ENCODE measurements at regions of chr3 and their contacts with region 1.

Region 1: GRCh38 chr3:185335799-185336198 is 27.1 kb upstream of the MAP3K13 start:
- DNase-seq: peak; percentile 98
- ATAC-seq: peak; percentile 82
- H3K4me3 ChIP-seq: no peak overlapping the region
- H3K27ac ChIP-seq: peak overlapping the region; percentile 77
- H3K4me1 ChIP-seq: peaks cover 53% of the 10 kb centered on the region
- H3K27me3 ChIP-seq: no peaks in the 10 kb centered on the region
- CTCF ChIP-seq: no peak

Region 2: DNA sequence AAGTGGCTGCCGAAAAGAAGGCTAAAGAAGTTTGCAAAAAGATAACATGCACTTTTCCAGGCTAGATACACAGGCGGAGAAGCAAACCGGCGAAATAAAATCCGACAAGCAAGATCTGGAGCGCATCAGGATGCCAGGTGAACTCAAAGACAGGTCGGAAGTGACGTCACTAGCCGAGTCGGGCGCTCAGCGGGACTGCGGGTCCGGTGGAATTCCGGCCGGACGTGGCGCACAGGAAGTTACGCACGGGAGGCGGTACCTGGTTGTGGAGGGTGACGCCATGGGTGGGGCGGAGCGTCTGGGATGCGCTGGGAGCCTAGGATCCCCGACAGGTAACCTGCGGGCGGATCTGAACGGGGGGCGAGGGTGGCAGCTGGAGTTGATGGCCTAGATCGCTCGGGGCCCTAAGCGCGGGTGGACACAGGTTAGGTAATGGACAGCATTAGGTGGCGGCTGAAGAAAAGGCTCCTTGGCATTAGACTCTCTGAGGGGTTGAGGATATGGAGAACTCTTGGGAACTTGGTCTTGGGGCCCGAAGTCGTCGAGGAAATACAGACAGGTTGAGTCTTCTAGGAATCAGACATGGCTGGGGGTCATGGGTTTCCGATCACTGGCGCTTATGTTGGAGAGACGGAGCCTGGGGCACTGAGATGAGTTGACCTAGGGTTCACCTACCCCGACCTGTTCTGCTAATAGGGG is 53.0 kb before region 1 on chr3:
- CTCF ChIA-PET with region 1: no interaction called
- POLR2A ChIA-PET with region 1: interaction called, 3 read pairs
- intact Hi-C with region 1: loop called (anchors 2 kb)
- DNase-seq: peak; percentile 98
- ATAC-seq: peak; percentile 99
- H3K4me3 ChIP-seq: peak overlapping the region; percentile 84
- H3K27ac ChIP-seq: peak overlapping the region; percentile 32
- H3K4me1 ChIP-seq: peaks cover 24% of the 10 kb centered on the region
- H3K27me3 ChIP-seq: no peaks in the 10 kb centered on the region
- CTCF ChIP-seq: no peak

Region 3: GRCh38 chr3:185297867-185298266 is 37.9 kb before region 1 on chr3:
- CTCF ChIA-PET with region 1: no interaction called
- POLR2A ChIA-PET with region 1: no interaction called
- intact Hi-C with region 1: no loop called
- DNase-seq: no peak
- ATAC-seq: no peak
- H3K4me3 ChIP-seq: no peak overlapping the region
- H3K27ac ChIP-seq: no peak overlapping the region
- H3K4me1 ChIP-seq: no peaks in the 10 kb centered on the region
- H3K27me3 ChIP-seq: no peaks in the 10 kb centered on the region
- CTCF ChIP-seq: no peak

Region 4: GRCh38 chr3:185318141-185318540 is 17.7 kb before region 1 on chr3:
- CTCF ChIA-PET with region 1: no interaction called
- POLR2A ChIA-PET with region 1: no interaction called
- intact Hi-C with region 1: loop called (anchors 2 kb)
- DNase-seq: peak; percentile 84
- ATAC-seq: peak; percentile 96
- H3K4me3 ChIP-seq: no peak overlapping the region
- H3K27ac ChIP-seq: peak overlapping the region; percentile 75
- H3K4me1 ChIP-seq: peaks cover 22% of the 10 kb centered on the region
- H3K27me3 ChIP-seq: no peaks in the 10 kb centered on the region
- CTCF ChIP-seq: no peak

Region 5: GRCh38 chr3:185362850-185363661 is 27.3 kb after region 1 on chr3 and contains the start of gene MAP3K13:
- CTCF ChIA-PET with region 1: no interaction called
- POLR2A ChIA-PET with region 1: no interaction called
- intact Hi-C with region 1: loop called (anchors 1 kb)
- DNase-seq: peak; percentile 97
- ATAC-seq: peak; percentile 93
- H3K4me3 ChIP-seq: peak within 1 kb of the TSS; percentile 80
- H3K27ac ChIP-seq: peak within 1 kb of the TSS; percentile 20
- H3K4me1 ChIP-seq: peaks cover 47% of the 10 kb centered on the region
- H3K27me3 ChIP-seq: no peaks in the 10 kb centered on the region
- CTCF ChIP-seq: no peak
- total RNA-seq, gene MAP3K13: 24.0 and 24.4 TPM in 2 replicates

Region 6: DNA sequence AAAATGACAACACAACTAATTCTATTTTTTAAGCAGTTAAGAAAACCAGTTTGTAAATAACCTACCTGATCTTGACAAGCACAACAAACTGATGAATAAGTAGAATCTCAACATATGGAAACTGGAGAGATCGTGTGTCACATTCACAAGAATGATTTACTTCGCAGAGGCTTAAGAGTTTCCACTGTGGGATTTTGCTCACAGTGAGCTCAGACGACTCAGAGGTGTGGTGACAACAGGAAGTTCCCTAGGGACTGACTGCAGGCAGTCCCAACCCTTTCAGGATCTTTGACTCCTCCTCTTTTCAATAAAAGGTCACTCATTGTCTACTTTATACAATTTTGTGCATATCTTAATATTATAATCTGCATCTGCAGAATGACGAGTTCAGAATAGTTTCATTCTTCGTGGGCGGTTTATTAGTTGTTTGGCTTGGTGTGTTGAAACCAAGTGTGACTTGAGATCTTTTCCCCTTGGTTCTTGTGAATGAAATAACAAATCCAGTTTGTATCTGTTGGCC is 216.6 kb after region 1 on chr3 and contains the start of gene LIPH:
- CTCF ChIA-PET with region 1: no interaction called
- POLR2A ChIA-PET with region 1: no interaction called
- intact Hi-C with region 1: loop called (anchors 5 kb)
- DNase-seq: peak; percentile 75
- ATAC-seq: peak; percentile 72
- H3K4me3 ChIP-seq: peak within 1 kb of the TSS; percentile 34
- H3K27ac ChIP-seq: peak within 1 kb of the TSS; percentile 39
- H3K4me1 ChIP-seq: peaks cover 51% of the 10 kb centered on the region
- H3K27me3 ChIP-seq: no peaks in the 10 kb centered on the region
- CTCF ChIP-seq: no peak
- total RNA-seq, gene LIPH: 0.35 and 1.0 TPM in 2 replicates

Measured in PC-3 (cell line).